ENCODE measurements at regions of chr5 and their contacts with region 1.

Region 1: GRCh38 chr5:155556700-155557099 is 543.1 kb downstream of the KIF4B start:
- DNase-seq: no peak
- ATAC-seq: no peak
- H3K4me3 ChIP-seq: no peak overlapping the region
- H3K27ac ChIP-seq: no peak overlapping the region
- H3K4me1 ChIP-seq: no peaks in the 10 kb centered on the region
- H3K27me3 ChIP-seq: no peaks in the 10 kb centered on the region
- CTCF ChIP-seq: no peak
- POLR2A ChIP-seq: no peak

Region 2: GRCh38 chr5:155434681-155435080 is 122.0 kb before region 1 on chr5:
- in situ Hi-C with region 1: no loop called
- intact Hi-C with region 1: loop called (anchors 5 kb)
- DNase-seq: no peak
- ATAC-seq: no peak
- H3K4me3 ChIP-seq: no peak overlapping the region
- H3K27ac ChIP-seq: no peak overlapping the region
- H3K4me1 ChIP-seq: no peaks in the 10 kb centered on the region
- H3K27me3 ChIP-seq: no peaks in the 10 kb centered on the region
- CTCF ChIP-seq: no peak
- POLR2A ChIP-seq: no peak

Region 3: DNA sequence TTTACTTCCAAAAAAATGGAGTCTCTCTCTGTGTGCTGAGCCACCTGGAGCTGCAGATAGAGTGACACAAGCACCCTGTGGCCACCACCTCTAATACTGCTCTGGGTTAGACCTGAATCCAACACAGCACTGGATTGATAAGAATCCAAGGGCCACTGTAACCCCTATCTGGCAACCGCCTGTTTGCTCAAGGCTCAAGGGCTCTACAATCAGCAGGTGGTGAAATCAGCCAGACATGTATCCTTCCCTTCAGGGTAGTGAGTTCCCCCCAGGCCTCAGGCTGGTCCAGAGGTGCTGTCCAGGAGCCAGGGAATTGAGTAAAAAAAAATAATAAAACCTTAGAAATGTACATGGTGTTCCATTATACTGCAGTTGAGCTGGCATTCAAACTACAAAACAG is 34.2 kb before region 1 on chr5:
- in situ Hi-C with region 1: no loop called
- intact Hi-C with region 1: no loop called
- DNase-seq: no peak
- ATAC-seq: no peak
- H3K4me3 ChIP-seq: no peak overlapping the region
- H3K27ac ChIP-seq: no peak overlapping the region
- H3K4me1 ChIP-seq: no peaks in the 10 kb centered on the region
- H3K27me3 ChIP-seq: no peaks in the 10 kb centered on the region
- CTCF ChIP-seq: no peak
- POLR2A ChIP-seq: no peak

Region 4: DNA sequence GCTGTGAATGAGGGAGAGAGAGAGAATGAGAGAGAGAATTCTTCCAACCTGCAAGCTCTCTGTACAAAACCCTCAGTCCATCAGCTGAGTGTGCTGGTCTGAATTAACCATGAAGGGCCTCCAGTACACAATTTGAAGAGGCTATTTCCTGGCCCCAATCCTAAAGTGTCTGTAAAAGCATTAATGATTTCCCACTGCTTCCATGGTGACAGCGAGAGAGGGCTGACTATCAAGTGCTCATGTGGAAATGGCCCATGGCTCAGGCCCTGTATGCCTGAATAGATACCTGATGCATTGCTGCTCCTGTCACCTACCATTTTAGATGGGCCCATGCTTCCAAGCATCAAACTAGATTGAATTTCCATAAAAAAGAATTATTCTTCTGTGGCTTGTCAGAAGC is 49.2 kb after region 1 on chr5:
- in situ Hi-C with region 1: no loop called
- intact Hi-C with region 1: no loop called
- DNase-seq: no peak
- ATAC-seq: no peak
- H3K4me3 ChIP-seq: no peak overlapping the region
- H3K27ac ChIP-seq: no peak overlapping the region
- H3K4me1 ChIP-seq: no peaks in the 10 kb centered on the region
- H3K27me3 ChIP-seq: no peaks in the 10 kb centered on the region
- CTCF ChIP-seq: no peak
- POLR2A ChIP-seq: no peak

Region 5: GRCh38 chr5:155996123-155996522 is 439.4 kb after region 1 on chr5:
- in situ Hi-C with region 1: no loop called
- intact Hi-C with region 1: no loop called
- DNase-seq: no peak
- ATAC-seq: no peak
- H3K4me3 ChIP-seq: no peak overlapping the region
- H3K27ac ChIP-seq: no peak overlapping the region
- H3K4me1 ChIP-seq: no peaks in the 10 kb centered on the region
- H3K27me3 ChIP-seq: no peaks in the 10 kb centered on the region
- CTCF ChIP-seq: no peak
- POLR2A ChIP-seq: no peak

Region 6: DNA sequence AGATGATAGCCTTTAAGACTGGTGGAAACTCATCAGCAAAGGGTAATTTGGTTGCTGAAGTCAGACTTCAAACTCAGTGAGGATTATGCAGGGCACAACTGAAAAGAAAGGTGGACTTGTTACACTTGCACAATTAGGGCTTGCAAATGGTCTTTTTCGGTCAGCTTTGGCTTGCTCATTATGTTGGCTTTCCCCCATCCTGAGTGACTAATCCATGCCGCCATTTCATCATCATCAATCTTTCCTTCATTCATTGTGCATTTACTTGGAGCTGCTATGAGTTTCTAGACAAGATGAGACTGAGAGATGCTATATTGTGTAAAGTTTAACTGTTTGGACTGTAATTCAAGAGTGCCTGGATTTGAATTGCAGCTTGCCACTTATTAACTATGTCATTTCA is 1158.6 kb after region 1 on chr5:
- in situ Hi-C with region 1: no loop called
- intact Hi-C with region 1: loop called (anchors 5 kb)
- DNase-seq: no peak
- ATAC-seq: peak; percentile 21 to 64
- H3K4me3 ChIP-seq: no peak overlapping the region
- H3K27ac ChIP-seq: no peak overlapping the region
- H3K4me1 ChIP-seq: peaks cover 0 to 11% of the 10 kb centered on the region in 2 donors
- H3K27me3 ChIP-seq: no peaks in the 10 kb centered on the region
- CTCF ChIP-seq: no peak
- POLR2A ChIP-seq: no peak